Activated CD4-positive, alpha-beta memory T cell treated with anti-CD3 and anti-CD28 coated beads, Interleukin-2, amount 10 ng/mL, durations not matched to agents 7 days and 5 days (primary cell): ENCODE measurements at regions of chr13 and their contacts with region 1.

Region 1: DNA sequence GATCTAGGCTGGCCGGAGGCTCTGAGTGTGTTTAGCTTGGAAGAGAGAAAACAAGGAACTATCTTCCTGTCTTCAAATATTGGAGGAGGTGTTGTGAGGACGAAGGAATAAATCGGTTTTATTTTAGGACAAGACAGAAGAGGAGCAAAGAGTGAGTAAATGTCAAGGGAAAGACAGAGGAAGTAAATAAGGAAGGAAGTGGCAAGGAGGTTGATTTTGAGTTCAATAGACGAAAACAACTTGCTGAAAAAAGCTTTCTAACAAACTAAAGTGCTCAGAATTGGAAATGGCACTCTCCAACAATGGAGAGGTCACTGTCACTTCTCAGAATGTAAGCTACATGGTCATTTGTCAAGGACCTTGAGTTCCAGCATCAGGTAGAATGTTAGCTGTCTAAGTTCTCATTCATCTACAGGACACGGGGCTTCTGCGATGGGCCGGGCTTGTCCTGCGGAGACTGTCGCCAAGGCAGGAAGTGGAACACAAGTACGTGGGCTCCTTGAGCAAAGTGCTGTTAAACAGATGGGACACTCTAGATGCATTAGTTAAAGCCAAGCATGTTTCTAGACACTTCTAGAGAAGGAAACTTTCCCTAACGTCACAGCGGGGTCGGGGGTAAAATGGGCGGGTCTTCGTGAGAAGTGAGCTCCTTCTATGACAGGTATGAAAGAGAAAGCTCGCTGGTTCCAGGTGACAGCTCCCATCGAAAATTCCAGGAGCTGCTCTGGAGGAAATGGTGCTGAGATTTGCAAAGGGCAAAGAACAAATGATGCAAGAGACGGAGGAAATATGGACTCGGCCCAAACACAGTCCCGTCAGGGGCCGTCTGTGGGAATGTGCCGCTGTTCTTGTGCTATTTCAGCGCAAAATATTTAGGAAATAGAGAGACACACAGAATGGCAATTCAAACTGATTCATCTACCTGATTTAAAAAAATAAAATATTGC is 103.9 kb upstream of the UBL3 start:
- DNase-seq: peak; percentile 69
- H3K4me3 Mint-ChIP-seq: peak overlapping the region; percentile 61
- H3K27ac Mint-ChIP-seq: peak overlapping the region; percentile 91
- H3K4me1 Mint-ChIP-seq: peaks cover 41% of the 10 kb centered on the region
- H3K27me3 Mint-ChIP-seq: peaks cover 5% of the 10 kb centered on the region

Region 2: DNA sequence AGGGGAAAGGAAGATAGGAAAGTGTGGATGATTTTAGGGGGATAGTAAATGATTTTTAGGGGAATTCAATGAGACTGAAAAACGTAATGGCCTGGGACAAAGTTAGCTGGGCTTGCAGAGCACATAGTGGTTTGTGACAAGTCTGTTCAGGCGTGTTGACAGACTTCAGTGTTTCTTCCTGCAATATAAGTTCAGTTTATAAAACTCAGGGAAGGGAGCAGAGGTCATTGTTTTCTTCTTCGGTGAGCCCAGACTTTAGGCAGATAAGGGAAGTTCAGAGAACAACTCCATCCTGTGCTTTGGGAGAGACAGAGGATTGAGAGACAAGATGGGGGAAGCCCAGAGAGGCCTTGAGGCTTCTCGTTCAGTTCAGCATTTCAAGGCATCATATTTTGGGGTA is 313.7 kb before region 1 on chr13:
- CTCF ChIA-PET with region 1: no interaction called
- POLR2A ChIA-PET with region 1: no interaction called
- DNase-seq: no peak
- H3K4me3 Mint-ChIP-seq: no peak overlapping the region
- H3K27ac Mint-ChIP-seq: no peak overlapping the region
- H3K4me1 Mint-ChIP-seq: no peaks in the 10 kb centered on the region
- H3K27me3 Mint-ChIP-seq: peaks cover 12% of the 10 kb centered on the region

Region 3: GRCh38 chr13:29850224-29850898 is 104.0 kb before region 1 on chr13 and contains the start of gene UBL3:
- CTCF ChIA-PET with region 1: interaction called, 4 read pairs
- POLR2A ChIA-PET with region 1: interaction called, 15 read pairs
- DNase-seq: peak; percentile 95
- H3K4me3 Mint-ChIP-seq: peak within 1 kb of the TSS; percentile 96
- H3K27ac Mint-ChIP-seq: peak within 1 kb of the TSS; percentile 95
- H3K4me1 Mint-ChIP-seq: peaks cover 37% of the 10 kb centered on the region
- H3K27me3 Mint-ChIP-seq: no peaks in the 10 kb centered on the region
- total RNA-seq, gene UBL3: 17.3 to 17.8 TPM

Region 4: DNA sequence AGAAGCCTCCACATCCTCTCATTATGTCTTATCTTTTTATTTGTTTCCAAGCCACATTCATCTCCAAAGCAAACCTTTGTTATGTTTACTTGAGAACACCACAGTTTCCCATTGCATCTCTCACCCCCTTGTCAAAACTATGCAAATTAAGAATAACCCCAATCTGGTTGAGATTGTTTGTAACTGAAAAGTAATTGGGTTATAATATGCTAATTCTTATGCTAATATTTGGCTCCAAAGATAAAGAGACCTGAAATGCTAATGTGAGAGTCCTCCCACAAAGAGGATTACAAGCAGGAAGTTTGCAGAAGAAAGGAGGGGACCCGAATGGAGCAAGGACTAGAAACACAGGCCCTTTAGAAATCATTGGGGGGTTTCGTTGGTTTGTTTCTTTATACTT is 11.1 kb before region 1 on chr13:
- CTCF ChIA-PET with region 1: interaction called, 43 read pairs
- POLR2A ChIA-PET with region 1: interaction called, 80 read pairs
- DNase-seq: no peak
- H3K4me3 Mint-ChIP-seq: no peak overlapping the region
- H3K27ac Mint-ChIP-seq: no peak overlapping the region
- H3K4me1 Mint-ChIP-seq: peaks cover 13% of the 10 kb centered on the region
- H3K27me3 Mint-ChIP-seq: no peaks in the 10 kb centered on the region